GM12878 (cell line): ENCODE measurements at regions of chr14 and their contacts with region 1.

Region 1: DNA sequence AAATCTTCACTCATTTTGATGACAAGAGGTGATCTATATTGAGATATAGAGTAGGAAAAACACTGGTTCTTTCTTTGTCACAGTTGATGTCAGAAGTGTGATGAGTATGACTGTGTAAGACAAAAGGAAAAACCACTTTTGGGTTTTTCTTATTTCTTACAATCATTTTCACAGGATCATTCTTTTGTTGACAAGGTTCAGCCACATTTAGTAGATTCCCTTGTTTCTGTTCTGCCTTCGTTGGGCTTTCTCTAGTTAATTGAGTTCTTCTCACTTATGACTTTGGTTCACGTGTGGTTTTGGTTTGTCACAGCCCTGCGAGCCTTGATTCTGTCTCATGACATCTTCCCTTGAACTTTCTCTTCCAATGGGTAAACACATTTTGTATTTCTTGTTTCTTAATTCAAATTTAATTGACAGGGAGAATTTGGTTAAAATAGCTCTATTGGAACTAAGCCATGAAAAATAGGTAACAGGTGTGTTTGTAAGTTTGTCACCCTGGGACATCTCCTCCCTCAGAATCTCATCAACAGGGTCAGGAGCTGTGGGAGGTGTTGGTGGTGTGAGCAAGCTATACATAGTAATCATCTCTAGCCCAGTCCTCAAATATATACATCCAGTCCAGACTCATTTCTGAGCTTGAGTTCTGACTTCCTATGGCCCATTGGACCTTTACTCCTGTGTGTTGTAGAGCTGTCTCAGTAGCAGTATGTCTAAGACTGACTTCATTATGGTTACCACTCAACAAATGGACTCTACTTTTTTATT is 255.3 kb downstream of the BMP4 start:
- DNase-seq: peak; percentile 40
- ATAC-seq: peak; percentile 85
- H3K4me3 ChIP-seq: no peak overlapping the region
- H3K27ac ChIP-seq: peak overlapping the region; percentile 37
- H3K4me1 ChIP-seq: peaks cover 13% of the 10 kb centered on the region
- H3K27me3 ChIP-seq: no peaks in the 10 kb centered on the region
- CTCF ChIP-seq: no peak
- EP300 ChIP-seq: peak; percentile 77 to 84; a peak in 2 of 4 replicates
- POLR2A ChIP-seq: no peak
- RAD21 ChIP-seq: 0 out of 2 replicates have a peak, but pooled peaks have one; percentile 4

Region 2: DNA sequence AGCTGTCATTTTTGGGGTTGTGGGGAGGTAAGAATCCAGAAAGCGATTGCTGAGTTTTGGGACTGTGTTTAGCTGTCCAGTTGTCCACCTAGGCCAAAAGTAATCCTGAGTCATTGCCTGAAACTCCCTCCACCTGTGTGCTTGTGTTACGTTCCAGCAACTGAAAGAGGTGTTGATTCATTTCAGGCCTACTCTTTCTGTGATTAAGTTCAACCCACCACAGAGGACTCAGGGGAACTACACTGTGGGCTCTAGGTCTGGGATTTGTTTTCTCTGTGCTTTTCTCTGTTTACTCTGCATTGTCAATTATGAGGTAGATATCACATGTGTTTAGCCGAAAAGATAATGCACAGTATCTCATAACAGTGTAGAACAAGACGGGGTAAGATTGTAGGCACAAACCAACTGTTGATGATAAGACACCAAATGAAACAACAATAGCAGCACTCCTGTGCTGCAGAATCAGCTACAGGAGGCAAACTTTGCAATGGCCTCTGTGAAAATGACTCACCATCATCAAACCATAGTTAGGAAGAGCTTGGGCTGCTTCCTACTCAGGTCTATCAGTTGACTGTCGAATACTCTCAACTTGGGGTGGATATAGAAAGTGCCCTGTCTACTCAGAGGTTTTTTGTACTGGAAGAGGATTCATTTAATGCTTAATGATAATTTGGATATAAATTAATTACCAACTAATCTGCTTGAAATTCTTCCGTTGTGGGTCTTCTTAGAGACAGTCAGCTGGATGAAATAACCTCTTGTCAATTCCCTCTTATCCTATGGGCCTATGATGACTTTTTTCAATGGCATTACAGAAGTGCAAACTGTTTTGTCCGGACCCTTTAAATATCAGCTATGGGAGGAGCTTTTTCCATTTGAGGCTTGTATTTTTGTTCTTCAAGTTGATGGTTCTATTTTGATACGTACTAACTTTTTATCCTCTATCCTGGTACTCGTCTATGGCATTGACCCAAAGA is 130.6 kb before region 1 on chr14:
- CTCF ChIA-PET with region 1: no interaction called
- POLR2A ChIA-PET with region 1: no interaction called
- RAD21 ChIA-PET with region 1: interaction called, 6 read pairs
- SMC1A ChIA-PET with region 1: interaction called, 4 read pairs
- in situ Hi-C with region 1: no loop called
- intact Hi-C with region 1: loop called (anchors 1 kb)
- DNase-seq: peak; percentile 69
- ATAC-seq: peak; percentile 94
- H3K4me3 ChIP-seq: no peak overlapping the region
- H3K27ac ChIP-seq: peak overlapping the region; percentile 73
- H3K4me1 ChIP-seq: peaks cover 26% of the 10 kb centered on the region
- H3K27me3 ChIP-seq: no peaks in the 10 kb centered on the region
- CTCF ChIP-seq: no peak
- EP300 ChIP-seq: peak; percentile 84 to 89; a peak in 3 of 4 replicates
- POLR2A ChIP-seq: no peak
- RAD21 ChIP-seq: no peak

Region 3: DNA sequence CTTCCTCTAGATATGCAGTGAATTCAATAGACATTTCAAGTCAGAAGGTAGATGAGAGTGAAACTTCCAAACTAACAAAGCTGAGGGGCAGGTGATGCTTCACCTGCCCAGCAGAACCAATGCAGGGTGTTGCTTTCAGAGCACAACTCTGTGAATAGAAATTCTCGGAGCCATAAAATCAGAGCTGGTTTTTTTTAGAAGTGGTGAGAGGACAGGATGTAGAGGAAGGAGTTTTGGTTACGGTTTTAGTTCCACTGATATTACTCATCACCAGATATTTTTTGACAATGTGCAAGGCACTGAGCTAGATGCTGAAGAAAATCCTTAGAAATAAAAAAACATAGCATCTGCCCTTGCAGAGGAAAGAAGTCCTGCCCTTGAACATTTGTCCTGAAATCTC is 193.2 kb after region 1 on chr14:
- CTCF ChIA-PET with region 1: no interaction called
- POLR2A ChIA-PET with region 1: no interaction called
- RAD21 ChIA-PET with region 1: no interaction called
- SMC1A ChIA-PET with region 1: no interaction called
- in situ Hi-C with region 1: no loop called
- intact Hi-C with region 1: no loop called
- DNase-seq: no peak
- ATAC-seq: peak; percentile 68
- H3K4me3 ChIP-seq: no peak overlapping the region
- H3K27ac ChIP-seq: peak overlapping the region; percentile 75
- H3K4me1 ChIP-seq: peaks cover 16% of the 10 kb centered on the region
- H3K27me3 ChIP-seq: no peaks in the 10 kb centered on the region; a peak in 1 of 4 replicates
- CTCF ChIP-seq: no peak
- EP300 ChIP-seq: no peak
- POLR2A ChIP-seq: no peak
- RAD21 ChIP-seq: peak; percentile 15; the same call in 1 of the 2 replicates